ENCODE measurements at regions of chr10 and their contacts with region 1.

Region 1: DNA sequence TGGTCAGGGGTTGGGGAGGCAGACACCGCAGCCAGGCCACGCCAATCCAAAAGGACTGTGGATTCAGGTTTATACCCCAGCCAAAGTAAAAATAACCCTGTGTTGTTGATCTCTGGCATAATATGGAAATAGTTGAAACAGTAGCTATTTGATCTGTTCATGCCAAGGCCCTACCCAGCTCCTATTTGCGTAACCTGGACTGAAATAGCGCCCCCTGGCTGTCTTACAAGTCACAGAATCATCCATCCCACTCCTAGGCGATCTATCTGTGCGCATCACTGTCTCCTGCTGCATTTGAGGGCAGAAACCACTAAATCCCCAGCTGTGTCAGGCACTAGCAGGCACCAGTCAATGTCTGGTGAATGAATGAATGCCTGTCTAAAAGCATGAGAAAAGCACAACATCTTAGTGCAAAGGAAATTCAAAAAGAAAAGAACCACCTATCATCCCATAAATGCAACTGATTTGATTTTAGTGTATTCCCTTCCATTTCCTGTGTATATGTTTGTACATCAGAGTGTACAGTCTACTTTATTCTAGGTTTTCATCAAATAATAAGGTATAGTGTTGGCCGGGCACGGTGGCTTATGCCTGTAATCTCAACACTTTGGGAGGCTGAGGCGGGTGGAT is 160.0 kb downstream of the SLIT1 start:
- DNase-seq: peak; percentile 73 to 80 (median 76)
- ATAC-seq: peak; percentile 65
- H3K4me3 ChIP-seq: no peak overlapping the region
- H3K27ac ChIP-seq: peak overlapping the region in 1 of 4 donors; percentile 22
- H3K4me1 ChIP-seq: peaks cover 25% of the 10 kb centered on the region
- H3K27me3 ChIP-seq: no peaks in the 10 kb centered on the region
- CTCF ChIP-seq: peak; percentile 56 to 77 (median 73)
- POLR2A ChIP-seq: no peak

Region 2: DNA sequence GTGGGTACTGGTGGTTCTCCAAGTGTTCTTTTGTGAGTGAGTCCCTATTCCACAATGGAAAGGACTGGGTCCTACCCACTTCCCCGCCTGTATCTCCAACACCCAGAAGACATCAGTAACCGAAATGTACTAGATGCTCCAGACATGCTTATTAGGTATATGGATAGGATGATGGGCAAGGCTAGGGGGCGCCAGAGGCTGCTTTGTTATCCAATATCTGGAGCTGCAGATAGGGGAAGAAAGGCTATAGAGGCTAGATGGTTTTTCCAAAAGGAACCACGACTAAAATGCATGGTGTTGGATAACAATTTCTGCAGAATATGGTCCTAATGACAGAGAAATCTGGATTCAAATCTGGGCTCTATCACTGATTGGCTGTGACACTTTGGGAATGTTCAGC is 382.8 kb before region 1 on chr10:
- intact Hi-C with region 1: loop called (anchors 10 kb)
- DNase-seq: peak; percentile 78 to 93 (median 90)
- ATAC-seq: peak; percentile 64
- H3K4me3 ChIP-seq: no peak overlapping the region
- H3K27ac ChIP-seq: peak overlapping the region in 1 of 4 donors; percentile 66
- H3K4me1 ChIP-seq: peaks cover 42% of the 10 kb centered on the region
- H3K27me3 ChIP-seq: no peaks in the 10 kb centered on the region
- CTCF ChIP-seq: peak; percentile 36 to 94 (median 86)
- POLR2A ChIP-seq: no peak

Region 3: GRCh38 chr10:96765406-96766240 is 260.1 kb before region 1 on chr10:
- intact Hi-C with region 1: loop called (anchors 5 kb)
- DNase-seq: peak; percentile 70 to 83 (median 74)
- ATAC-seq: peak; percentile 74
- H3K4me3 ChIP-seq: no peak overlapping the region
- H3K27ac ChIP-seq: no peak overlapping the region
- H3K4me1 ChIP-seq: no peaks in the 10 kb centered on the region
- H3K27me3 ChIP-seq: no peaks in the 10 kb centered on the region
- CTCF ChIP-seq: peak; percentile 56 to 85 (median 78)
- POLR2A ChIP-seq: no peak

Region 4: GRCh38 chr10:96991313-96991841 is 34.4 kb before region 1 on chr10:
- intact Hi-C with region 1: no loop called
- DNase-seq: no peak
- ATAC-seq: no peak
- H3K4me3 ChIP-seq: no peak overlapping the region
- H3K27ac ChIP-seq: no peak overlapping the region
- H3K4me1 ChIP-seq: peaks cover 6% of the 10 kb centered on the region
- H3K27me3 ChIP-seq: no peaks in the 10 kb centered on the region
- CTCF ChIP-seq: no peak
- POLR2A ChIP-seq: no peak

Measured in body of pancreas (tissue), 4 donors.